ENCODE measurements at regions of chr17 and their contacts with region 1.

Region 1: DNA sequence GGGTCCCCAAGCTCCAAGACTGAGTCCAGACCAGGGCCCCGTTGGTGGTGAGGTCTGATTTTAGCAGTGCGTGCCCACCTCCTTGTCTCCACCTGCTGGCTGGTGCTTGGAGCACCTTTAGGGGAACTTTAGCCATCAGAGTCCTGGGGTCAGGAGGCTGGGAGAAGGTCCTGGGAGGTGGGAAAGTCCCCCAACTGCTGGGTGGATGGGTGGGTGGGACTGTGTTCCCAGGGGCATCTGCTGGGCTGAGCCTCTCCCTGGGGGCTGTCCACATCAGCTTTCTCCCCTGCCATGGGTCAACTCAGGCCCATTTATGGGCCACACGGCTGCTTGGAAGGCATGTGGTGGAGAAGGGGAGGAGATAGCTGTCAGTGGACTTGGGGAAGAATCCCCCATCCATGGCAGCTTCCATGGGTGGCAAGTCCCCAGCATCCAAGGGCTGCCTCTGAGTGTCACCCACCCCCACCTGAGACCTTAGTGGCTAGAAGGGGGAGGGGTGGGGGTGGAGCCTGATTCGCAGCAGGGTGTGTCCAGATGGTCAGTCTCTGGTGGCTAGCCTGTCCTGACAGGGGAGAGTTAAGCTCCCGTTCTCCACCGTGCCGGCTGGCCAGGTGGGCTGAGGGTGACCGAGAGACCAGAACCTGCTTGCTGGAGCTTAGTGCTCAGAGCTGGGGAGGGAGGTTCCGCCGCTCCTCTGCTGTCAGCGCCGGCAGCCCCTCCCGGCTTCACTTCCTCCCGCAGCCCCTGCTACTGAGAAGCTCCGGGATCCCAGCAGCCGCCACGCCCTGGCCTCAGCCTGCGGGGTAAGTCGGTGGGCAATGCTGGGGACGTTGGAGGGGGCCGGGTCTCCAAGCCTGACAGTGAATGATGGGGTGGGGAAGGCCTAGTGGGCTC is at the start of gene TRPV2:
- DNase-seq: peak; percentile 72
- H3K4me3 Mint-ChIP-seq: peak within 1 kb of the TSS; percentile 94
- H3K27ac Mint-ChIP-seq: peak within 1 kb of the TSS; percentile 100
- H3K4me1 Mint-ChIP-seq: peaks cover 47% of the 10 kb centered on the region
- H3K27me3 Mint-ChIP-seq: no peaks in the 10 kb centered on the region
- total RNA-seq, gene TRPV2: 46.0 to 50.6 TPM

Region 2: DNA sequence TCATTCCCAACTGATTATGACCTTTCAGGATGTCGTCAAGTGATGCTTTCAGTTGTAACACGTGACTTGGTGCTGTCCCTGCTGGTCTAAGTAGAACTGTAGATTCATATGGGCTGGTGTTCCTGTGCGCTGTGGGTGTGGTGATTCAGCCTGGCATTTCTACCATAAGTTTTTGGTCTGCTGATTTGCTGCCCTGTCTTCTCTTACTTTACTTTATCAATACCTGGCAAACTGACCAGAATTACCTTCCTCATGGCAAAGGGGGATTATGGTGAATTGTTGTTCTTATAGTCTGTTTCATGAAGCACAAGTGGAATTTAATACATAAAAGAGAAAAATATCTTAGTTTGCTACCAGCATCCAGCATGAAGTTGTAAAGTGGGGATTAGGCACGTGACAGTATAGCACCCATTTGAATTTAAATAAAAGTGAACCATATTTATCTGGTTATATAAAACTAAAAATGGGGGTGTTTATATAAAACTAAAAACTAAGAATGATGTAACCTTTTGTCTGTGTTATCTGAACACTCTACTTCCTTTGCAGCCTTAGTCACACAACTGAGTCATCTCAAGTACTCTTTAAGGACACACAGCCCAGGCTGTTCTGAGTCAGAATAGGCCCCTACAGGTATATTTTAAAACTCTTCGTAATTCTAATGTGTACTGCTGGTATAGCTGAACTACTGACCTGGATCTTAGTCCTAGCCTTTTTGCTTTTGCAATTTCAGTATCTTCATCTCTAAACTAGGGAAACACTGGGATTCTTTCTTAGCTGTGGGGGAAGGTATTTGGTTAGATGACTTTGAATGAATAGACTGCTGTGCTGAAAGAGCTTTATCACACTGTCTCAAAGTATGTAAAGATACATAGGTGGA is 387.3 kb before region 1 on chr17:
- CTCF ChIA-PET with region 1: no interaction called
- POLR2A ChIA-PET with region 1: interaction called, 4 read pairs
- intact Hi-C with region 1: loop called (anchors 10 kb)
- DNase-seq: peak; percentile 81
- H3K4me3 Mint-ChIP-seq: peak overlapping the region; percentile 64
- H3K27ac Mint-ChIP-seq: peak overlapping the region; percentile 97
- H3K4me1 Mint-ChIP-seq: peaks cover 48% of the 10 kb centered on the region
- H3K27me3 Mint-ChIP-seq: no peaks in the 10 kb centered on the region

Region 3: DNA sequence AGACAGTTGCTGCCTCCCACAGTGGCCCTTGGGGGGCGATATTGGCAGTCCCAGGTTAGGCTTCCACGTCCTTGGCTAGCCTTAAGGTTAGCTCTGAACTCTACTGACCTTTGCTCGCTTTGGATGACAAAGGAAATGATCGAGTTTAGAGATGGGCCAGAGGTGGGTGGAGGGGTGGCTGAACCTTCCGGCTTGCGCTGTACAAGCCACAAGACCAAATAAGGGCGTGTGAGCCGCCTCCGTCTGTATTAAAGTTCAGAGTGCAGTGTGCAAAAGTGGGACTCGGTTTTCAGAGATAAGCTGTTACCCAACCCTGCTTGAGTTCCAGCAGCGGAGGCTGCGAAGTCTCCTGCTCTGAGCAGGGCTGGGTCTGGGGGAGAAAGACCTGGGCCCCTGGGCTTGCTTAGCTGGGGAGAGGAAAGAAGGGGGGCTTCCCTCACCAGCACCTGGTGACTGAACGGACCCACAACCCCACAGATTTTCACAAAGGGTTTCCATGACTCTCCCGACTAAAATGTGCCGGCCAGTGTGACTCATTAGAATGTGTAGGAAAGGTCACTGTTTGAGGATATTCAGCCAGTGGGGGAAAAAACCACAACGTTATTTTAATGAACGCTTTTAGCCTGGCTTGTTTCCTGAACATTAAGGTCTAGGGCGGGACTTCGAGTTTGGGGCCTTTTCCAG is 129.2 kb before region 1 on chr17:
- CTCF ChIA-PET with region 1: no interaction called
- POLR2A ChIA-PET with region 1: no interaction called
- intact Hi-C with region 1: loop called (anchors 2 kb)
- DNase-seq: peak; percentile 90
- H3K4me3 Mint-ChIP-seq: peak overlapping the region; percentile 68
- H3K27ac Mint-ChIP-seq: peak overlapping the region; percentile 94
- H3K4me1 Mint-ChIP-seq: peaks cover 52% of the 10 kb centered on the region
- H3K27me3 Mint-ChIP-seq: no peaks in the 10 kb centered on the region

Region 4: GRCh38 chr17:16363749-16364536 is 51.3 kb before region 1 on chr17:
- CTCF ChIA-PET with region 1: interaction called, 79 read pairs
- POLR2A ChIA-PET with region 1: interaction called, 8 read pairs
- intact Hi-C with region 1: loop called (anchors 1 kb)
- DNase-seq: peak; percentile 86
- H3K4me3 Mint-ChIP-seq: no peak overlapping the region
- H3K27ac Mint-ChIP-seq: no peak overlapping the region
- H3K4me1 Mint-ChIP-seq: peaks cover 7% of the 10 kb centered on the region
- H3K27me3 Mint-ChIP-seq: no peaks in the 10 kb centered on the region

Region 5: DNA sequence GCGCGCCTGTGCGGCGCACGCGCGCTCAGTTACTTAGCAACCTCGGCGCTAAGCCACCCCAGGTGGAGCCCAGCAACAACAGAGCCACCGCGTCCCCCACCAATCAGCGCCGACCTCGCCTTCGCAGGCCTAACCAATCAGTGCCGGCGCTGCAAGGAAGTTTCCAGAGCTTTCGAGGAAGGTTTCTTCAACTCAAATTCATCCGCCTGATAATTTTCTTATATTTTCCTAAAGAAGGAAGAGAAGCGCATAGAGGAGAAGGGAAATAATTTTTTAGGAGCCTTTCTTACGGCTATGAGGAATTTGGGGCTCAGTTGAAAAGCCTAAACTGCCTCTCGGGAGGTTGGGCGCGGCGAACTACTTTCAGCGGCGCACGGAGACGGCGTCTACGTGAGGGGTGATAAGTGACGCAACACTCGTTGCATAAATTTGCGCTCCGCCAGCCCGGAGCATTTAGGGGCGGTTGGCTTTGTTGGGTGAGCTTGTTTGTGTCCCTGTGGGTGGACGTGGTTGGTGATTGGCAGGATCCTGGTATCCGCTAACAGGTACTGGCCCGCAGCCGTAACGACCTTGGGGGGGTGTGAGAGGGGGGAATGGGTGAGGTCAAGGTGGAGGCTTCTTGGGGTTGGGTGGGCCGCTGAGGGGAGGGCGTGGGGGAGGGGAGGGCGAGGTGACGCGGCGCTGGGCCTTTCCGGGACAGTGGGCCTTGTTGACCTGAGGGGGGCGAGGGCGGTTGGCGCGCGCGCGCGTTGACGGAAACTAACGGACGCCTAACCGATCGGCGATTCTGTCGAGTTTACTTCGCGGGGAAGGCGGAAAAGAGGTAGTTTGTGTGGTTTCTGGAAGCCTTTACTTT is 34.4 kb before region 1 on chr17 and contains the start of gene UBB:
- CTCF ChIA-PET with region 1: interaction called, 34 read pairs
- POLR2A ChIA-PET with region 1: interaction called, 50 read pairs
- intact Hi-C with region 1: loop called (anchors 1 kb)
- DNase-seq: peak; percentile 98
- H3K4me3 Mint-ChIP-seq: peak within 1 kb of the TSS; percentile 93
- H3K27ac Mint-ChIP-seq: peak within 1 kb of the TSS; percentile 99
- H3K4me1 Mint-ChIP-seq: peaks cover 40% of the 10 kb centered on the region
- H3K27me3 Mint-ChIP-seq: no peaks in the 10 kb centered on the region
- total RNA-seq, gene UBB: 1,695 to 1,771 TPM

Region 6: DNA sequence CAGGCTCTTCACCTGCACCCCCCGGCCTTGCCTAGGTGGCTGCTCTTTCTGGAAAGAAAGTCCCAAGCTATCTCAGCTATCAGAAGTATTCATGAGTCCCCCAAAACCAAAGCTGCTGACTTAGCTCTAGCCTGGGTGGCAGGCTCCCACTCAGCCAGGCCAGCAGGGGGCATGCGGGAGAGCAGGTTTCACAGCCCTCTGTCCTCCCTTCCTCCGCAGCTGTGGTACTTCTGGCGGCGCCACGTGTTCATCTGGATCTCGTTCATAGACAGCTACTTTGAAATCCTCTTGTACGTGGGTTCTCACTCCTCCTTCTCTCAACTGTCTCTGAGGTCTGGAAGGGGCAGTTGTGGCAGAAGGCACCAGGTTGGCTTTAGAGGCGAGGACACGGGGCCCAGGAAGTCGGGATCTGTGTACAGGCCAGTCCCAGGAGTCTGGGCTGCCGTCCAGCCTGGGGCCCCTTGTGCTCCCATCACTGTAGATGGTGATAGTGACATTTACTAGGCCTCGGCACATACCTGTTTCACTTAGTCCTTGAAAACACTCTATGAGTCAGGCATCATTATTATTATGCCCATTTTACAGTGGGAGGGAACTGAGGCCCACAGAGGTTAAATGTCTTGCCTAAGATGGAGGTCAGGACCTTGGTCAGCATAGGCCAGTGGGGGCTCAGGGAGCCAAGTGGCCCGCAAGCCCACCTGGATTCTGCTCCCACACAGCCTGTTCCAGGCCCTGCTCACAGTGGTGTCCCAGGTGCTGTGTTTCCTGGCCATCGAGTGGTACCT is 13.0 kb after region 1 on chr17:
- CTCF ChIA-PET with region 1: interaction called, 10 read pairs
- POLR2A ChIA-PET with region 1: interaction called, 3 read pairs
- intact Hi-C with region 1: no loop called
- DNase-seq: peak; percentile 66
- H3K4me3 Mint-ChIP-seq: no peak overlapping the region
- H3K27ac Mint-ChIP-seq: no peak overlapping the region
- H3K4me1 Mint-ChIP-seq: no peaks in the 10 kb centered on the region
- H3K27me3 Mint-ChIP-seq: no peaks in the 10 kb centered on the region

Measured in activated CD4-positive, alpha-beta memory T cell treated with anti-CD3 and anti-CD28 coated beads for 36 hours (primary cell).